CD4-positive, alpha-beta memory T cell (primary cell): ENCODE measurements at regions of chr20 and their contacts with region 1.

Region 1: GRCh38 chr20:52312132-52312729 is 120.7 kb upstream of the ZFP64 start:
- DNase-seq: peak; percentile 44 to 69 (median 64)
- H3K4me3 ChIP-seq: no peak overlapping the region
- H3K4me3 Mint-ChIP-seq: no peak overlapping the region
- H3K27ac ChIP-seq: no peak overlapping the region
- H3K27ac Mint-ChIP-seq: no peak overlapping the region
- H3K4me1 ChIP-seq: peaks cover 2% of the 10 kb centered on the region
- H3K4me1 Mint-ChIP-seq: peaks cover 5 to 26% (median 12%) of the 10 kb centered on the region in 4 donors
- H3K27me3 ChIP-seq: no peaks in the 10 kb centered on the region
- H3K27me3 Mint-ChIP-seq: no peaks in the 10 kb centered on the region

Region 2: DNA sequence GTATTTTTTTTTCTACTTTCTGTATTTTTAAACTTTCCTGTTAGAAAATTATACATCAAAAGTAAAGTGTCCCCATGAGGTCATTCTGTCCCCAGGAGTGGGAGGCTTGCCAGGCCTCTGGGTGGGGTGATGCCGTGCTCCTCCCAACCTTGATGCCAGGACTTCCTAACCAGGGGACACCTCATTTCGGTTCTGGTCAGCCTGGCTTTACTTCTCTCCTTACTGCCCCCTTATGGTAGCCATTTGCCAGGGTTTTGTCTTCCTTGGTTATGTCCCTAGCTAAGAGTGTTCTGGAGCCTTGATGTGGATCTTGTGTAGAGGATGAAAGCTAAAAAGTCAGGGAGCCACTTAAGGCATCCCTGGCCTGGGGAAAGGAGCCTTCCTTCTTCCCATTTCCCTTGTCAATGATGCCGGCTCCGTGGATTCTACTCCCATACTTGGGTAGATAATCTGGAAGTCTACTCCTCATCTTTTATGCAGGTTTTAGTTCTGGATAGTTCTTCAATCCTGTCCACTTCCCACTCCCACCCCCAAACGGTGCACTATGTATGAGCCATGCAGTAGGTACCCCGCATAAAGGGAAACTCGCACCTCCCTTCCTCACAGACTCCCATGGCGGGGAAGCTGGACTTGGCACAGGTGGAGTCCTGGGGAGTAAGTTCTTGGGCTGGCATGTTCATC is 345.8 kb before region 1 on chr20:
- CTCF ChIA-PET with region 1: no interaction called
- POLR2A ChIA-PET with region 1: no interaction called
- intact Hi-C with region 1: no loop called
- DNase-seq: no peak
- H3K4me3 ChIP-seq: no peak overlapping the region
- H3K4me3 Mint-ChIP-seq: no peak overlapping the region
- H3K27ac ChIP-seq: no peak overlapping the region
- H3K27ac Mint-ChIP-seq: no peak overlapping the region
- H3K4me1 ChIP-seq: no peaks in the 10 kb centered on the region
- H3K4me1 Mint-ChIP-seq: peaks cover 0 to 3% (median 0%) of the 10 kb centered on the region in 4 donors
- H3K27me3 ChIP-seq: no peaks in the 10 kb centered on the region
- H3K27me3 Mint-ChIP-seq: peaks cover 4 to 5% of the 10 kb centered on the region in 2 donors

Region 3: GRCh38 chr20:52172392-52173047 is 139.7 kb before region 1 on chr20:
- CTCF ChIA-PET with region 1: no interaction called
- POLR2A ChIA-PET with region 1: no interaction called
- intact Hi-C with region 1: no loop called
- DNase-seq: no peak
- H3K4me3 ChIP-seq: no peak overlapping the region
- H3K4me3 Mint-ChIP-seq: no peak overlapping the region
- H3K27ac ChIP-seq: no peak overlapping the region
- H3K27ac Mint-ChIP-seq: peak overlapping the region in 3 of 7 donors; percentile 5 to 57 (median 16)
- H3K4me1 ChIP-seq: no peaks in the 10 kb centered on the region
- H3K4me1 Mint-ChIP-seq: peaks cover 0 to 1% (median under 1%) of the 10 kb centered on the region in 4 donors
- H3K27me3 ChIP-seq: no peaks in the 10 kb centered on the region
- H3K27me3 Mint-ChIP-seq: no peaks in the 10 kb centered on the region

Region 4: GRCh38 chr20:52379723-52380336 is 67.6 kb after region 1 on chr20:
- CTCF ChIA-PET with region 1: interaction called, 5 read pairs
- POLR2A ChIA-PET with region 1: no interaction called
- intact Hi-C with region 1: loop called (anchors 1 kb)
- DNase-seq: peak in 3 of 5 donors; percentile 19 to 28 (median 23)
- H3K4me3 ChIP-seq: no peak overlapping the region
- H3K4me3 Mint-ChIP-seq: no peak overlapping the region
- H3K27ac ChIP-seq: no peak overlapping the region
- H3K27ac Mint-ChIP-seq: peak overlapping the region in 2 of 7 donors; percentile 1 to 37
- H3K4me1 ChIP-seq: peaks cover 10% of the 10 kb centered on the region
- H3K4me1 Mint-ChIP-seq: peaks cover 10 to 24% (median 13%) of the 10 kb centered on the region in 4 donors
- H3K27me3 ChIP-seq: no peaks in the 10 kb centered on the region
- H3K27me3 Mint-ChIP-seq: no peaks in the 10 kb centered on the region

Region 5: GRCh38 chr20:52614051-52614863 is 302.0 kb after region 1 on chr20:
- CTCF ChIA-PET with region 1: no interaction called
- POLR2A ChIA-PET with region 1: no interaction called
- intact Hi-C with region 1: no loop called
- DNase-seq: no peak
- H3K4me3 ChIP-seq: no peak overlapping the region
- H3K4me3 Mint-ChIP-seq: no peak overlapping the region
- H3K27ac ChIP-seq: no peak overlapping the region
- H3K27ac Mint-ChIP-seq: no peak overlapping the region
- H3K4me1 ChIP-seq: no peaks in the 10 kb centered on the region
- H3K4me1 Mint-ChIP-seq: peaks cover 4 to 5% (median 4%) of the 10 kb centered on the region in 4 donors
- H3K27me3 ChIP-seq: no peaks in the 10 kb centered on the region
- H3K27me3 Mint-ChIP-seq: peaks cover 3 to 13% of the 10 kb centered on the region in 2 donors

Region 6: DNA sequence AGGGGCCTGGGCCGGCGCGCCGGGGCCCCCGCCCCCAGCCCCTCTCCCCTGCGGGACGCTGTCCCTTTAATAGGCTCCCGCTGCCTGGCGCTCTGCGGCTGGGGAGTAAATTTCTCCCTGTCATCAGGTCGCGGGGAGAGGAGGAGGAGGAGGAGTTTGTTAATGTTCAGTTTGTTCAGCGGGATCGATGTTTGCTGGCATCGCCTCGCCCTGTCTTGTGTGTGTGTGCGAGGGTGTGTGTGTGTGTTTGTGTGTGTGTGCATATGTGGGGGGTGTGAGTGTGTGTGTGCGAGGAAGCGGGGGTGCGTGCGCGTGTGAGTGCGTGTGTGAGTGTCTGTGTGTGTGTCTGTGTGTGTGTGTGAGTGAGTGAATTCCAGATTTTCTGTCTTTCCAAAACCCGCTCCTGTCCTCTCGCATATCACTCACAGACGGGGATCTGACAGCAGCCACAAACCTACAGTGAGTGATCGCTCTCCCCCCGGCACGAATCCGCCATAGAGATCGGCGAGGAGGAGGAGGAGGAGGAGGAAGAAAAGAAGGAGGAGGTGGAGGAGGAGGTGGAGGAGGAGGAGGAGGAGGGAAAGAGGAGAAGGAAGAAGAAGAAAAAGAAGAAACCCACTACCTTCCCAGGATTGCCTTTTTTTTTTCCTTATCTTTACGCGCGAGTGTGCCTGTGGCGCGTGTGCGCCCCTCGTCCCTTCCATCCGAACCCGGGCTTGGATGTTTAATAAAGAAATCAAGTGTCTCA is 660.1 kb after region 1 on chr20 and contains the start of gene TSHZ2:
- CTCF ChIA-PET with region 1: interaction called, 3 read pairs
- POLR2A ChIA-PET with region 1: no interaction called
- intact Hi-C with region 1: loop called (anchors 2 kb)
- DNase-seq: peak; percentile 45 to 77 (median 60)
- H3K4me3 ChIP-seq: peak within 1 kb of the TSS; percentile 49 to 63
- H3K4me3 Mint-ChIP-seq: peak within 1 kb of the TSS; percentile 91 to 98 (median 96)
- H3K27ac ChIP-seq: peak within 1 kb of the TSS; percentile 71
- H3K27ac Mint-ChIP-seq: peak within 1 kb of the TSS; percentile 89 to 98 (median 96)
- H3K4me1 ChIP-seq: peaks cover 29% of the 10 kb centered on the region
- H3K4me1 Mint-ChIP-seq: peaks cover 11 to 56% (median 29%) of the 10 kb centered on the region in 4 donors
- H3K27me3 ChIP-seq: no peaks in the 10 kb centered on the region
- H3K27me3 Mint-ChIP-seq: peaks cover 5 to 28% of the 10 kb centered on the region in 2 donors
- total RNA-seq, gene TSHZ2: 30.2 to 31.8 TPM

Region 7: DNA sequence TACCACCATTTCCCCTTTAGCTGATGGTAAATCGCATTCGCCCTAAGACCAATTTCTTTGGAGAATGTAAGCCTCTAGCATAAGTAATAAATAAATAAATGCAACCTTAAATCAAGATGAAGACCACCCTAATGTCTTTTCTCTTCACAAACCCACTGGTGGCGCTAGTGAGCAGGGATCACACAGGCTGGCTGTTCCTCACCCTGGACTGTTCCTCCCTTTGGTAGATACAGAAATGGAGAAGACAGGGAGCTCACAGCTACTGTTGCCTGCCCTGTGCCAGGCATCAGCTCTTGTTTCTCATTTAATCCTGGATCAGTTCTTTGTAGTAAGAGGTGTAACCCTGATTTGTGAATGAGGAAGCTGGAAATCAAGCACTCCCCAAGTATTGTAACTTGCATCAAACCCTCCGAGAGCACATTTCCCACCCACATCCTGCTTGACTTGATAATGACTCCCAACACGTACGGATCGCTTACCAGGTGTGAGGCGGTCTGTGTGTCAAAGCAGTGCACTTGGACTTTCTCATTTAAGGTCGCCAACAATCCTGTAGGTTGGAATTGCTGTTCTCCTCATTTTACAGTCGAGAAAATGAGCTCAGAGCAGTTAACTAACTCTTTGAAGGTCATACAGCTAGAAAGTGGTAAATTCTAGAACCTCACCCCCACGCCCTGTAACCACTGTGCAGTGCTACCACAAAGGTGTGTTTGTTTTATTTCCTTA is 896.0 kb after region 1 on chr20:
- CTCF ChIA-PET with region 1: interaction called, 10 read pairs
- POLR2A ChIA-PET with region 1: no interaction called
- intact Hi-C with region 1: no loop called
- DNase-seq: peak in 4 of 5 donors; percentile 13 to 52 (median 22)
- H3K4me3 ChIP-seq: peak overlapping the region in 1 of 2 donors; percentile 22
- H3K4me3 Mint-ChIP-seq: peak overlapping the region; percentile 51 to 81 (median 66)
- H3K27ac ChIP-seq: no peak overlapping the region
- H3K27ac Mint-ChIP-seq: peak overlapping the region; percentile 44 to 86 (median 72)
- H3K4me1 ChIP-seq: peaks cover 15% of the 10 kb centered on the region
- H3K4me1 Mint-ChIP-seq: peaks cover 5 to 22% (median 16%) of the 10 kb centered on the region in 4 donors
- H3K27me3 ChIP-seq: no peaks in the 10 kb centered on the region
- H3K27me3 Mint-ChIP-seq: no peaks in the 10 kb centered on the region

Region 8: GRCh38 chr20:53939572-53940359 is 1627.5 kb after region 1 on chr20:
- CTCF ChIA-PET with region 1: interaction called, 4 read pairs
- POLR2A ChIA-PET with region 1: no interaction called
- intact Hi-C with region 1: loop called (anchors 5 kb)
- DNase-seq: peak; percentile 50 to 60 (median 52)
- H3K4me3 ChIP-seq: no peak overlapping the region
- H3K4me3 Mint-ChIP-seq: no peak overlapping the region
- H3K27ac ChIP-seq: no peak overlapping the region
- H3K27ac Mint-ChIP-seq: peak overlapping the region in 3 of 7 donors; percentile 3 to 77 (median 18)
- H3K4me1 ChIP-seq: peaks cover 21% of the 10 kb centered on the region
- H3K4me1 Mint-ChIP-seq: peaks cover 14 to 43% (median 24%) of the 10 kb centered on the region in 4 donors
- H3K27me3 ChIP-seq: no peaks in the 10 kb centered on the region
- H3K27me3 Mint-ChIP-seq: no peaks in the 10 kb centered on the region